Head of caudate nucleus (tissue), 42 donors: ENCODE measurements at regions of chr17 and their contacts with region 1.

Region 1: GRCh38 chr17:16945663-16946218 is 26.2 kb downstream of the TNFRSF13B start:
- DNase-seq: peak in 14 of 42 donors; percentile 2 to 37 (median 14)

Region 2: GRCh38 chr17:16991349-16992009 is 45.7 kb after region 1 on chr17:
- intact Hi-C with region 1: loop called (anchors 10 kb)
- DNase-seq: peak; percentile 75 to 93 (median 88)